Sigmoid colon (tissue), 7 donors: ENCODE measurements at regions of chrX and their contacts with region 1.

Region 1: GRCh38 chrX:111869639-111870034 is 6.3 kb upstream of the TRPC5OS start:
- DNase-seq: no peak
- H3K4me3 ChIP-seq: no peak overlapping the region
- H3K27ac ChIP-seq: no peak overlapping the region
- H3K4me1 ChIP-seq: peaks cover 0 to 5% (median 0%) of the 10 kb centered on the region in 4 donors
- H3K27me3 ChIP-seq: no peaks in the 10 kb centered on the region
- CTCF ChIP-seq: peak in 3 of 4 experiments; percentile 25 to 51 (median 44)
- EP300 ChIP-seq: no peak
- POLR2A ChIP-seq: no peak

Region 2: DNA sequence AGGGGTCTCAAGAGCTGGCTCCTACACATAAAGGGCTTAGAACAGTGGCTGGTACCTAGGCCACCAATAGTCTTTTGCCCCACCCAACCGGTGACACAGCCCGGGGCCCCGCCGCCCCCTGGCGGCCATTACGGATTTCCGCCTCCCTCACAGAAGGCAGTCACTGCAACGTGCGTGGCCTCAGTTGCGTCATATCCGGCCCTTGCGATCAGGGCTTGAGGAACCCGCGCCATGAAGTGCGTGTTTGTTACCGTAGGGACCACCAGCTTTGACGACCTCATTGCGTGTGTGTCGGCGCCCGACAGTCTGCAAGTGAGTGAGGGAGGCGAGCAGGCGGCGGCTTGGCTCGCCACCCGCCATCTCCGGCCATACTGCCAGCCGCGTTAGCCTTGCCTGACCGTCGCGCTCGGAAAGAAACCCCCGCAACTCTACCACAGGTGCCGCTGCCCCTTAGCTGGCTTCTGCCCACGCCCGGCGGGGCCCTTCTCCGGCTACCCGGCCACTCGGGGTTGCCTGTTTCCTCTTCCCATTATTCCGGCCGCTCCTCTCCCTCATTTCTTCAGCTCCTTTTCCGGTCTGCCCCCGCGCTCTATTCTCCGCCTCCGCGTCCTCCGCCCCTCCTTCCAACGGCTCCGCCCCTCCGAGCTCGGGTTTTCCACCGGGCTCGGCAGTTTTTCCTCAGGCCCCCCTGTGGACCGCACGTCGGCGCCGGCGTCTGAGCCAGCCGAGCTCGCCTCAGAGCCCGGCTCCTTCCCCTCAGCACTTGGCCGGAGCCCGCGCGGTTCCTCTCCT is 188.5 kb before region 1 on chrX and contains the start of gene ALG13:
- intact Hi-C with region 1: no loop called
- DNase-seq: peak; percentile 96
- H3K4me3 ChIP-seq: peak within 1 kb of the TSS; percentile 68 to 84 (median 74)
- H3K27ac ChIP-seq: peak within 1 kb of the TSS; percentile 94 to 99 (median 97)
- H3K4me1 ChIP-seq: peaks cover 0 to 11% (median 3%) of the 10 kb centered on the region in 4 donors
- H3K27me3 ChIP-seq: peaks cover 0 to 3% (median 0%) of the 10 kb centered on the region in 3 donors
- CTCF ChIP-seq: peak; percentile 39 to 65 (median 56)
- EP300 ChIP-seq: peak in 3 of 4 donors; percentile 22 to 44 (median 25)
- POLR2A ChIP-seq: peak; percentile 32 to 40
- total RNA-seq, gene ALG13: 34.9 to 80.9 (median 42.1) TPM

Region 3: GRCh38 chrX:111702986-111703385 is 166.7 kb before region 1 on chrX:
- intact Hi-C with region 1: no loop called
- DNase-seq: no peak
- H3K4me3 ChIP-seq: no peak overlapping the region
- H3K27ac ChIP-seq: no peak overlapping the region
- H3K4me1 ChIP-seq: no peaks in the 10 kb centered on the region
- H3K27me3 ChIP-seq: no peaks in the 10 kb centered on the region
- CTCF ChIP-seq: no peak
- EP300 ChIP-seq: no peak
- POLR2A ChIP-seq: no peak

Region 4: DNA sequence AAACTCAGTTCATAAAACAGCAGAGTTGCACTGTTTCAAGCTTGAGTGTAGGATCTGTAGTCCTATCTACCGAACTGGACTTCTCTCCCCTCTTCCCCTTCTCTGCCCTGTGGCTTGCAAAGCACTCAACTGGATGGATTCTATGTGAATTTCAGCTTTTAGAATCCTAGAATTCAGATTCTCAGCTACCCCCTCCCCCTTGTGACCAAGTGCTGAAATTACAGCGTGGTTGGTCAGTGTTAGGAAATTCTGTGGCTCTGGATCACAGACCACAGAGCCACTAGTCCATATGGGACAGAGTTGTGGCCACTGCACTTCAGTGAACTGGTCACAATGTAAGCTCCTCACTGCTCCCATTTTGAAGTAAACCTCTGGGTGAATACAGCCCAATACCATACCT is 277.6 kb after region 1 on chrX:
- intact Hi-C with region 1: loop called (anchors 5 kb)
- DNase-seq: no peak
- H3K4me3 ChIP-seq: no peak overlapping the region
- H3K27ac ChIP-seq: no peak overlapping the region
- H3K4me1 ChIP-seq: no peaks in the 10 kb centered on the region
- H3K27me3 ChIP-seq: peaks cover 0 to 3% (median 0%) of the 10 kb centered on the region in 3 donors
- CTCF ChIP-seq: no peak
- EP300 ChIP-seq: no peak
- POLR2A ChIP-seq: no peak

Region 5: DNA sequence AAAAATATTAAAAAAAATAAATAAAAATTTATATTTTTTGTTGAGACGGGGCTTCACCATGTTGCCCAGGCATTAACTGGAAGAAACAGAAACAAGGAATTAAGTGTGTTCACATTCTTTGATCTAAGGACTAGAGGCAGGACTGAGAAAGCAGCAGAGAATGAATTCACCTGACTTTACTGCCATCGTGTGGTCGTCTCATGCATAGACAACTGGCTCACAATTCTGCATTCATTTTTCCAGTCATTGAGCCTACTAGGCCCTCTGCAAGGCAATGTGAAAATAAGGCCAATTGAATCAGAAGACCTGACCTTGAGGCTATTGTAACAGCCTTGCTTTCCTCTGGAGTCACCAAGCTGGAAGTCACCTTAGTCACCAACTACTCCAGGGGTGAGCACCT is 772.7 kb after region 1 on chrX:
- intact Hi-C with region 1: loop called (anchors 10 kb)
- DNase-seq: no peak
- H3K4me3 ChIP-seq: no peak overlapping the region
- H3K27ac ChIP-seq: no peak overlapping the region
- H3K4me1 ChIP-seq: no peaks in the 10 kb centered on the region
- H3K27me3 ChIP-seq: no peaks in the 10 kb centered on the region
- CTCF ChIP-seq: peak in 3 of 4 experiments; percentile 22 to 51 (median 27)
- EP300 ChIP-seq: no peak
- POLR2A ChIP-seq: no peak